ENCODE measurements at regions of chr14 and their contacts with region 1.

Region 1: DNA sequence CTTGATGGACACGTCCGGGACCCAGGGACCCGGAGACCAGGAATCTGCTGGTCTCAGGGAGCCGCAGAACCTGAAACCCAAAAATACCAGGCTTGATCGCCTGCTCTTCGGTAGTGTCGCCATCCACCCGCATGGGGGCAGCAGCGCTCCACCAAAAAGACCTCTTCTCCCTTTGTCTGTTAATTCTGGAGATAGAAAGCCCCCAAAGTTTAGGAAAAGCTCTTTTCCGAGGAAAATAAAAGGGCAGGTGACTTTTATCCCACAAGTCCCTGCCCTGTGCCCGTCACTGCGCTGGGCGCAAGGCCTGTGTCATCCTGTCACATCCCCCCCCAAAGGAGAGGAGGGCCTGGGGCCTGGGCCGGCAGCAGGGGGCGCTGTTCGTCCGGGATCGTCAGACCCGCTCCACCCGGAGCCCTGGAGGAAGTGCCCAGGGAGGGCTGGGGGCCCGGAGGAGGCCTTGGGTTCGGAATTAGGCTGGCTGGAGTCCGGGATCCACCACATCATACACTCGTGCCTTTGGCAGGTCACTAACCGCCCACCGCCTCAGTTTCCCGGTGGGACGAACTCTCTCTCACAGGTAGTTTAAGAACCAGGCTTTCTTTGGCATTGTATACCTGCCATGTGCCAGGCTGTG is 31.9 kb downstream of the DAD1 start:
- DNase-seq: peak; percentile 93
- ATAC-seq: peak; percentile 5
- H3K4me3 Mint-ChIP-seq: peak overlapping the region; percentile 82
- H3K27ac Mint-ChIP-seq: peak overlapping the region; percentile 94
- H3K4me1 Mint-ChIP-seq: peaks cover 84% of the 10 kb centered on the region
- H3K27me3 Mint-ChIP-seq: peaks cover 3% of the 10 kb centered on the region
- CTCF ChIP-seq: peak; percentile 100

Region 2: DNA sequence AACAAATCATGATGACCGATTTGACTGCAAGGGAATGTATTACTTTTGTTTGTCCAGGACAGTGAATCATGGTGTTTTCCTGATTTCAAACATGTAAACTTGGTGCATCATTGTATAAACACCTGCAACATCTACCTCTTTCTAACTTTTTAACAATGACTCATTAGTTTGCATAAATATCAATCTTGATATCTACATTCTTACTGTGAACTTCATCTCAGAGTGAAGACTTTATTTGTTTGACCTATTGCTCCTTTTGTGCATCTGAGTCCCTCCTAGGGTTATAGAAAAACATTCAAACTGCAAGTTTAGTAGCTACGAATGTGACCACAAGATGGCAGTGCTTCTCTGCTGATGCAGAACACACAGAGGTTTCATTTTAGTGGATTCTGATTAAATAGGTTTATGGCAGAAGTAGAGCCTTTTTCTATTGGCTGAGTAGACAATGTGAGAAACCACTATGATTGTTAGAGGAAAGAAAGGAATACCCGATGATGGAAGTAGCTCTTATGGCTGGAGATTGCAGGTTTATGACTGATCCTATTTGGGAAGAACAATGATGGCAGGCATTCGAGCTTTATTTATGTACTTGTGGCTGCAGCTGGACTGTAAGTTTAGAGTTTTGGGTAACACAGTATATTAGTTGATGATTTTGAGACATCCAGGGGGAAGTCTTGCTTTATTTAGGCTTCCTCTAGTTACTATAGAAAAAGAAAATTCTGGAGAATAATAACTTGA is 639.2 kb before region 1 on chr14:
- CTCF ChIA-PET with region 1: interaction called, 8 read pairs
- POLR2A ChIA-PET with region 1: interaction called, 6 read pairs
- intact Hi-C with region 1: loop called (anchors 5 kb)
- DNase-seq: peak; percentile 81
- ATAC-seq: peak; percentile 58
- H3K4me3 Mint-ChIP-seq: peak overlapping the region; percentile 79
- H3K27ac Mint-ChIP-seq: peak overlapping the region; percentile 85
- H3K4me1 Mint-ChIP-seq: peaks cover 52% of the 10 kb centered on the region
- H3K27me3 Mint-ChIP-seq: no peaks in the 10 kb centered on the region
- CTCF ChIP-seq: peak; percentile 58

Region 3: GRCh38 chr14:21997300-21997699 is 559.8 kb before region 1 on chr14:
- CTCF ChIA-PET with region 1: interaction called, 8 read pairs
- POLR2A ChIA-PET with region 1: interaction called, 12 read pairs
- intact Hi-C with region 1: no loop called
- DNase-seq: peak; percentile 66
- ATAC-seq: peak; percentile 88
- H3K4me3 Mint-ChIP-seq: peak overlapping the region; percentile 95
- H3K27ac Mint-ChIP-seq: peak overlapping the region; percentile 96
- H3K4me1 Mint-ChIP-seq: peaks cover 20% of the 10 kb centered on the region
- H3K27me3 Mint-ChIP-seq: no peaks in the 10 kb centered on the region
- CTCF ChIP-seq: peak; percentile 33

Region 4: GRCh38 chr14:22505697-22506377 is 51.3 kb before region 1 on chr14:
- CTCF ChIA-PET with region 1: interaction called, 9 read pairs
- POLR2A ChIA-PET with region 1: interaction called, 575 read pairs
- intact Hi-C with region 1: no loop called
- DNase-seq: no peak
- ATAC-seq: peak; percentile 38
- H3K4me3 Mint-ChIP-seq: peak overlapping the region; percentile 79
- H3K27ac Mint-ChIP-seq: peak overlapping the region; percentile 96
- H3K4me1 Mint-ChIP-seq: peaks cover 10% of the 10 kb centered on the region
- H3K27me3 Mint-ChIP-seq: no peaks in the 10 kb centered on the region
- CTCF ChIP-seq: no peak

Region 5: DNA sequence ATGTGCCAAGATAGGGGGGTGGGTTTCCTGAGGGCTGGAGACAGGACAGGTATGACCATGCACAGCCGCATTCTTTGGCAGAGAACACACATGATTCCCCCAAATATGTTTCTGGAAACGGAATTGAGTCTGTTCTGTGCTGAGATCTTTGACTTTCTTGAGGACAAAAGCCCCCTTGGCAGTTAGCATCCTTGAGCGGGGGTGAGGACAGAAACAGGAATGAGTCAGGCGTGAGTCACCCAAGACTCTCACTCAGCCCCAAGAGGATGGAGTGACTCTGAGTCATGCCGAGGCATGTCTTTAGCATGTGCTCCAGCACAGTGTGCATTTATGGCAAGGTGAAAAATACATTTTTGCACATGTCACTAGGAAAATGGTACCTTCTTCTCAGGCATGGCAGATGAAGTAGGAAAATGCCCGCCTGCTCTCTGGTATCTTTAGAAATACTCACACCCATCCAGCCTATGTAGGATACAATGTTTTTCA is 20.2 kb before region 1 on chr14:
- CTCF ChIA-PET with region 1: interaction called, 72 read pairs
- POLR2A ChIA-PET with region 1: interaction called, 496 read pairs
- intact Hi-C with region 1: no loop called
- DNase-seq: peak; percentile 96
- ATAC-seq: peak; percentile 86
- H3K4me3 Mint-ChIP-seq: peak overlapping the region; percentile 79
- H3K27ac Mint-ChIP-seq: peak overlapping the region; percentile 94
- H3K4me1 Mint-ChIP-seq: peaks cover 88% of the 10 kb centered on the region
- H3K27me3 Mint-ChIP-seq: no peaks in the 10 kb centered on the region
- CTCF ChIP-seq: no peak

Region 6: DNA sequence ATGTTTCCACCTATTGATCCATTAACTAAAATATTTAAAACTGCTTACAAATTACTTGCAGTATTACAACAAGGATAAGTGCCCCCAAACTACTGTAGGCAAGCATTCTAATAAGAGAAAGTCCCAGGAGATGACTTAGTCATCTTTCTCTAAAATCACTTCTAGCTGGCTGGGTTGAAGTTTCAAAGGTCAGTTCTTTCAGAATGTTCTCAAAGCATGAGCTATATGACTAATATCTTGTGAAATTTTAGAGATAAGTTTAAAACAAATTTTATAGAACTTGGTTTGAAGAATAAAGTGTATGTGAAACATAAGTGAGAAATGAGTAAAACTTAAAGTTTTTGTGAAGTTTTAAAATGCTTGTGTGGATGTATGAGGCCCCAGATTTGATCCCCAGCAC is 111.3 kb after region 1 on chr14:
- CTCF ChIA-PET with region 1: no interaction called
- POLR2A ChIA-PET with region 1: no interaction called
- intact Hi-C with region 1: no loop called
- DNase-seq: no peak
- ATAC-seq: peak; percentile 84
- H3K4me3 Mint-ChIP-seq: no peak overlapping the region
- H3K27ac Mint-ChIP-seq: peak overlapping the region; percentile 49
- H3K4me1 Mint-ChIP-seq: peaks cover 12% of the 10 kb centered on the region
- H3K27me3 Mint-ChIP-seq: no peaks in the 10 kb centered on the region
- CTCF ChIP-seq: no peak

Region 7: DNA sequence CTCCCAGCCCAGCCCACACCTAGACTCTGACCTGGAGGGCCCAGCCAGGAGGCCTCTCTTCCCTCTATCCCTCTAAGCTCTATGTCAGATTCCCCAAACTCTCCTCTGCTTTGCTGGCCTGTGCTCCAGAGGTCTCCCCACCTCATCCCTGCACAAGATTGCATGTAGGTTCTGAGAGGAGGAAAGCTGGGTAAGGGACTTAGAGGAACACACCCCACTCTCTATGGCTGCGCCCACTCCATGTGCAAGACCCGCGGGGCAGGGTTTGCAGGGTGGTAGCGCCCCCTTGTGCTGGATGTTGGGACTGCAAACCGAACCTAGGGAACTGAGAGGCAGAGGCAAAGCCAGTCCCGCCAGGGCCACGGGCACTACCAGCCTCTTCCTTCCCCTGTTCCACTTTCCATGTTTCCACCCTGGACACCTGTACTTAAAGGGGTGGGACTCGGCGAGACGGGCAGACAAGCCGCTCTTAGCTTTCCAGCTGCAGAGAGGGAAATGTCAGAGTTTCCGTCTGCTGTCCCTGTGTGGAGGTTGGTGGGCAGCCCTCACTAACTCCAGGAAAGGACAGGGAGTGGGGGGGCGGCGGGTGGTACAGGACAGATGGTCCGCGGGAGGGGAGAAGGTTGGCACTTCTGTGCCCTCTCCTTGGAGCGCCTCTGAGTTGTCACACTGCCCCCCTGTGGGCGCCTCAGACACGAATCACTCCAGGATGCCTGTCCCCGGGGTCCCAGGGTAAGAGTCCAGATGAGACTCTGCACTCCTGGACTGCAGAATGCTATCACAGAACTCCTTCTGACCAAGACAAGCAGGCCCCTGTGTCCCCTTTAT is 296.0 kb after region 1 on chr14:
- CTCF ChIA-PET with region 1: interaction called, 12 read pairs
- POLR2A ChIA-PET with region 1: no interaction called
- intact Hi-C with region 1: no loop called
- DNase-seq: peak; percentile 96
- ATAC-seq: peak; percentile 82
- H3K4me3 Mint-ChIP-seq: peak overlapping the region; percentile 71
- H3K27ac Mint-ChIP-seq: peak overlapping the region; percentile 79
- H3K4me1 Mint-ChIP-seq: peaks cover 15% of the 10 kb centered on the region
- H3K27me3 Mint-ChIP-seq: peaks cover 13% of the 10 kb centered on the region
- CTCF ChIP-seq: peak; percentile 92